ENCODE measurements at regions of chr7 and their contacts with region 1.

Region 1: GRCh38 chr7:36677769-36678437 is 46.4 kb downstream of the AOAH start:
- DNase-seq: peak; percentile 78
- H3K4me3 Mint-ChIP-seq: peak overlapping the region; percentile 69
- H3K27ac Mint-ChIP-seq: peak overlapping the region; percentile 93
- H3K4me1 Mint-ChIP-seq: peaks cover 45% of the 10 kb centered on the region
- H3K27me3 Mint-ChIP-seq: no peaks in the 10 kb centered on the region

Region 2: DNA sequence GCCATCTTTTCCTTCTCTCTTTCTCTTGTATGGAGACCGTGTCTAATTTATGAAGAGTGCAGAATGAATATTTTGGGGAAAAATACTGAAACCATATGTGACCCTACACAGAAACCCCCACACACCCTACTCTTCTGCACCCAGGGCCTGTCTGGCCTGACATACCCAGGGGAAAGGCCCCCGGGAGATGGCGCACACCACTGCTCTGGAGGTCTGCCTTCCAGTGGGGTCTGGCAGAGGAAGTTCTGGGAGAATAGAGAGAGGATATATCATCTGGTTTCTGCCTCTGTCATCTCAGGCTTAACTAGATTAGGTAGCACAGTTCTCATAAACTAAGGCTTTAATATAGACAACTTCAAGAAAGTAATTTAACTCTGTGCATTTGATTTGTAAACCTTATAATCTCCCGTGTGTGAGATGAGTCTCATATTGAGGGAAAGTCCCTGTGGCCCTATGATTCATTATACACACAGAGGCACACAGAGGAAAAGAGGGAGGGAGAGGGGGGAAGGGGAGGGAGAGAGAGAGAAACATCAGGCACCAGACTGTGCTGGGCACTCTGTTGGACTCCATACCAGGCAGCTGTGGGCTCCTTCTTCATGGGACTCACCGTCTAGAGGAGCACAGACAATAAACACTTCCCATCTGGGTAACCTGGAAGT is 76.9 kb before region 1 on chr7:
- intact Hi-C with region 1: loop called (anchors 5 kb)
- DNase-seq: peak; percentile 67
- H3K4me3 Mint-ChIP-seq: no peak overlapping the region
- H3K27ac Mint-ChIP-seq: peak overlapping the region; percentile 53
- H3K4me1 Mint-ChIP-seq: peaks cover 62% of the 10 kb centered on the region
- H3K27me3 Mint-ChIP-seq: no peaks in the 10 kb centered on the region

Region 3: DNA sequence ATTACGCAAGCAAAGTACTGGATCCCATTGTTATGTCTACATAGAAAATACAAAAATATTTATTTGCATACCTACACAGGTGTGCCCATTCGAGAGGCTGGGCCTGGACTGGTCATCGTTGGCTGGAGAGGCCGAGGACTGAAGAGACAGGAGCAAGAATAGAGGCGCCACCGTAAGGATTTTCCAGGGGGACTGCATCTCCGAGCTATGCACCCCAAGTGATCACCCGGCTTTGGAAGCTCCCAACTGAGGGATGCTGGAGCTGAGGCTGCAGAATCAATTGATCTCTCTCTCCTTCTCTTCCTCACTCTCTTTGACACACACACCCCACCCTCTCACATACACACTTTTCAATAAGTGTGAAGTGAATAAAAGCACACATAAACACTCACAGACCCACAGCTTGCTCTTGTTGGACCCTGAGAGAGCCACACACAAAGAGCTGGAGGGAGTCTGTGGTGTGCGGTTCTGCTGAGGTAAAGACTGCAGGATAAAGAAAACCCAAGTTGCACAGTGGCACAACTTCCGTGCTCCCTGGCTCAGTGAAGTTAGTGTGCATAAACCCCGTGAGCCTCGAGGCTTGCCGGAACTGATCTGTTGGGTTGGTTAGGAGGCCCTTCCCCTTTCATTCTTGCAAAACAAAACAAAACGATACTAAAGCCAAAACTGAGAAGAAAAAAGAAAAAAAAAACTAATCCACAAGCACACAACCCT is 46.2 kb after region 1 on chr7 and contains the start of gene AOAH:
- intact Hi-C with region 1: loop called (anchors 2 kb)
- DNase-seq: peak; percentile 95
- H3K4me3 Mint-ChIP-seq: peak within 1 kb of the TSS; percentile 94
- H3K27ac Mint-ChIP-seq: peak within 1 kb of the TSS; percentile 97
- H3K4me1 Mint-ChIP-seq: peaks cover 74% of the 10 kb centered on the region
- H3K27me3 Mint-ChIP-seq: no peaks in the 10 kb centered on the region
- total RNA-seq, gene AOAH: 17.6 and 17.8 TPM in 2 replicates

Region 4: GRCh38 chr7:36852017-36852416 is 174.1 kb after region 1 on chr7:
- intact Hi-C with region 1: loop called (anchors 1 kb)
- DNase-seq: no peak
- H3K4me3 Mint-ChIP-seq: peak overlapping the region; percentile 36
- H3K27ac Mint-ChIP-seq: peak overlapping the region; percentile 79
- H3K4me1 Mint-ChIP-seq: peaks cover 24% of the 10 kb centered on the region
- H3K27me3 Mint-ChIP-seq: no peaks in the 10 kb centered on the region

Region 5: DNA sequence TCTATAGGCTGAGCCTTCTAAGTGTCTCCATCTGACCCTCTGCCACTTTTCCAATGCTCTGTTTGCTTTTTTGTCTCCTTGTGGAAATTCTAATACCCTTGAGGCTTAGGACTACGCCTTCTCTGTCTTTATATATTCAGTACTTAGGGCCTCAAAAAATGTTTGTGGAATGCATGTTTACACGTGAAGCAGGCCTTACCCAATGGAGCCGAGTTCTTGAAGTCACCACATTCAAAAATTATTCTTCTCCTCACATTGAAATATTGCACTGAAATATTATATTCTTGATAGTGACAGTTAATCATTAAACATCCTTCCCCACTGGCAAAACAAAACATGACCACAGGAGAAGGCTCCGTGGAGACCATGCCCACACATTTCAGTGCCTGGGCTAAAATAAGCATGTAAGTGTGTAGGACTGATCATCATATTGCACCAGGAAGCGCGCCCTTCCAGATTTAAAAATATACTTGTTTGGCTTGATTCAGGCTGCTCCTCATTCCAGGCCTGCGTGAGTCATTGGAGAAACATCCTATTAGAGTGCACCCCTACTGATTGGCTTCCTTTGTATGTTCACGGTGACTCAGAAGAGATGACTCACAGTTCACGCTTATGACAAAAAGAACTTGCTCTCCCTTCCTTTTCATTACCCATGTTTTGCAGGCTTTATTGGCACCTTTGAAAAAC is 353.8 kb after region 1 on chr7:
- intact Hi-C with region 1: loop called (anchors 5 kb)
- DNase-seq: peak; percentile 72
- H3K4me3 Mint-ChIP-seq: no peak overlapping the region
- H3K27ac Mint-ChIP-seq: peak overlapping the region; percentile 77
- H3K4me1 Mint-ChIP-seq: peaks cover 49% of the 10 kb centered on the region
- H3K27me3 Mint-ChIP-seq: no peaks in the 10 kb centered on the region

Region 6: DNA sequence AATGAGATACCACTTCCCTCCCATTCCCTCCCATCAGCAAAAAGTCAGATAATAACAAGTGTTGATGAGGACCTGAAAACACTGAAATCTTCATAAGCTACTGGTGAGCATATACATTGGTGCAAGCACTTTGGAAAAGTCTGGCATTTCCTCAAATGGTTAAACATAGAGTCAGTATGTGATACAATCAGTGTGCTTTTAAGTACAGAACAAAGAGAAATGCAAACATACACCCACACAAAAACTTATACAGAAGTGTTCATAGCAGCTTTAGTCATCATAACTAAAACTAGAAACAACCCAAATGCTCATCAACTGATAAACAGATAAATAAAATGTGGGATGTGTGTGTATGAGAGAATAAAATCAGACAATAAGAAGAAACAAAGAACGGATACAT is 508.9 kb after region 1 on chr7:
- intact Hi-C with region 1: loop called (anchors 2 kb)
- DNase-seq: peak; percentile 45
- H3K4me3 Mint-ChIP-seq: no peak overlapping the region
- H3K27ac Mint-ChIP-seq: peak overlapping the region; percentile 8
- H3K4me1 Mint-ChIP-seq: peaks cover 9% of the 10 kb centered on the region
- H3K27me3 Mint-ChIP-seq: no peaks in the 10 kb centered on the region